ENCODE measurements at regions of chr12 and their contacts with region 1.

Region 1: DNA sequence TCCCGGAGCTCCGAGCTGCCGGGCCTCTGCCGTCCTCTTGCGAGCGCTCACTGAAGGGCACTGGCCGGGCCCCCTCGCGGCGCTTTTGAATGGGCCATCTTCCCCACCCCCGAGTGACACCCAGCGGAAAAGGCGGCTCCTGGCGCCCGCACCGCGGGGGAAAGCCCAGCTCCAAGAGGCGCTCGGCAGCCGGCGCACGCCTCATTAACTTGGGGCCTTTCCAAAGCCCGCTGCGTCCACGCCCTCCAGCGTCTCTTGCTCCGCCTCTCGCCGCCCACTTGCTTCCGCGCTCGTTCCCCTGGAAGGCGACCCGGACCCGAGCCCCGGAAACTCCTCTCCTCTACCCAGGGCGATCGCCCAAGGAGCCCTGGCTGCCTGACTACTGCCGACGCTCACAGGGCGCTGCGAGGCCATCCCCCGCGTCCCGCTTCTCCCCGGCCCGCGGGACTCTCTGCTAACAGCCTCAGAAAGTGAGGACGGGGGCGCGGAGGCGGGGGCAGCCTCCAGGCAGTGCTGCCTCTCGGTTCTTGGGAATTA is at the start of gene PHLDA1:
- DNase-seq: peak; percentile 96
- H3K4me3 Mint-ChIP-seq: peak within 1 kb of the TSS; percentile 90
- H3K27ac Mint-ChIP-seq: peak within 1 kb of the TSS; percentile 91
- H3K4me1 Mint-ChIP-seq: peaks cover 29% of the 10 kb centered on the region
- H3K27me3 Mint-ChIP-seq: peaks cover 2% of the 10 kb centered on the region
- total RNA-seq, gene PHLDA1: 2.7 to 2.8 TPM

Region 2: GRCh38 chr12:75334384-75335030 is 697.1 kb before region 1 on chr12 and contains the start of gene GLIPR1L1:
- CTCF ChIA-PET with region 1: no interaction called
- intact Hi-C with region 1: loop called (anchors 2 kb)
- DNase-seq: peak; percentile 92
- H3K4me3 Mint-ChIP-seq: peak within 1 kb of the TSS; percentile 44
- H3K27ac Mint-ChIP-seq: no peak within 1 kb of the TSS
- H3K4me1 Mint-ChIP-seq: peaks cover 18% of the 10 kb centered on the region
- H3K27me3 Mint-ChIP-seq: peaks cover 32% of the 10 kb centered on the region
- total RNA-seq, gene GLIPR1L1: not detected

Region 3: GRCh38 chr12:75511116-75512048 is 520.2 kb before region 1 on chr12 and contains the start of gene KRR1:
- CTCF ChIA-PET with region 1: interaction called, 4 read pairs
- intact Hi-C with region 1: loop called (anchors 1 kb)
- DNase-seq: peak; percentile 95
- H3K4me3 Mint-ChIP-seq: peak within 1 kb of the TSS; percentile 95
- H3K27ac Mint-ChIP-seq: peak within 1 kb of the TSS; percentile 98
- H3K4me1 Mint-ChIP-seq: peaks cover 29% of the 10 kb centered on the region
- H3K27me3 Mint-ChIP-seq: no peaks in the 10 kb centered on the region
- total RNA-seq, gene KRR1: 81.1 to 83.9 TPM

Region 4: GRCh38 chr12:75722714-75723200 is 308.8 kb before region 1 on chr12:
- CTCF ChIA-PET with region 1: no interaction called
- intact Hi-C with region 1: loop called (anchors 2 kb)
- DNase-seq: peak; percentile 64
- H3K4me3 Mint-ChIP-seq: no peak overlapping the region
- H3K27ac Mint-ChIP-seq: peak overlapping the region; percentile 18
- H3K4me1 Mint-ChIP-seq: peaks cover 15% of the 10 kb centered on the region
- H3K27me3 Mint-ChIP-seq: peaks cover 6% of the 10 kb centered on the region

Region 5: DNA sequence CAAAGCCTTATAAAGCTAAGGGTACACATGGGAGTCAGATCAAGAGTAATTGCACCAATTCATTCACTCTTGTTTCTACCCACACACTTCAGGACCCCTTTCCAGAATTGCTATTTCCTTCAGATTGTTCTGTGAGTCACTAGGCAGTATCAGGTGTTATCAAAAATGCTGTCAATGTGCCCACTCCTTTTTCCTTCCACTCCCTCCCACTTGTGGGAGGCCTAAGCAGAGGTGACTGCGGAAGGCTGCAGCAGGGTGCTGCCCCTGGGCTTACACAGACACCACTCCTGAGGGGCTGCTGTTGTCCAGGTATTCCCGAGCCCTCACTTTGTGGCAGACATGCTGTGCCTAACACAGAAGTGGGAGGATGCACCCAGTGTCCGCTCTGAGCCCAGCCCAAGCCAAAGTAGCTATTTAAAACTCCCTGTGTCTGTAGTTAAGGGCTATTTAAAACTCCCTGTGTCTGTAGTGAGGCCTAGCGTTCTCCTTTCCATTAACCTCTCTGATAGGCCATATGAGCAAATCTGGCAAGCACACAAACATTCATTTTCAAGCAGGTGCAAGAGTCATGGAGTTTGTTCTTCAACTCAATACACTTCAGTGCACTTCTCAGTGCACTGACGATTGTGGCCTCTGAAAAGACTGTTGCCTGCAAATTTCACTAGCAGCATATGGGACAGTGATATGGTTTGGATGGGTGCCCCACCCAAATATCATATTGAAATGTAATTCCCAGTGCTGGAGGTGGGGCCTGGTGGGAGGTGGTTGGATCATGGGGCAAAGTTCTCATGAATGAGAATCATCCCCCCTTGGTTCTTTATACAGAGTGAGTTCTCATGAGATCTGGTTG is 117.9 kb before region 1 on chr12:
- CTCF ChIA-PET with region 1: no interaction called
- intact Hi-C with region 1: loop called (anchors 1 kb)
- DNase-seq: peak; percentile 49
- H3K4me3 Mint-ChIP-seq: no peak overlapping the region
- H3K27ac Mint-ChIP-seq: no peak overlapping the region
- H3K4me1 Mint-ChIP-seq: peaks cover 21% of the 10 kb centered on the region
- H3K27me3 Mint-ChIP-seq: no peaks in the 10 kb centered on the region

Region 6: GRCh38 chr12:75977952-75978671 is 53.5 kb before region 1 on chr12:
- CTCF ChIA-PET with region 1: interaction called, 17 read pairs
- intact Hi-C with region 1: loop called (anchors 1 kb)
- DNase-seq: peak; percentile 90
- H3K4me3 Mint-ChIP-seq: peak overlapping the region; percentile 57
- H3K27ac Mint-ChIP-seq: peak overlapping the region; percentile 99
- H3K4me1 Mint-ChIP-seq: peaks cover 60% of the 10 kb centered on the region
- H3K27me3 Mint-ChIP-seq: no peaks in the 10 kb centered on the region

Region 7: GRCh38 chr12:76101739-76102385 is 70.3 kb after region 1 on chr12:
- CTCF ChIA-PET with region 1: no interaction called
- intact Hi-C with region 1: no loop called
- DNase-seq: no peak
- H3K4me3 Mint-ChIP-seq: no peak overlapping the region
- H3K27ac Mint-ChIP-seq: no peak overlapping the region
- H3K4me1 Mint-ChIP-seq: no peaks in the 10 kb centered on the region
- H3K27me3 Mint-ChIP-seq: no peaks in the 10 kb centered on the region

Region 8: DNA sequence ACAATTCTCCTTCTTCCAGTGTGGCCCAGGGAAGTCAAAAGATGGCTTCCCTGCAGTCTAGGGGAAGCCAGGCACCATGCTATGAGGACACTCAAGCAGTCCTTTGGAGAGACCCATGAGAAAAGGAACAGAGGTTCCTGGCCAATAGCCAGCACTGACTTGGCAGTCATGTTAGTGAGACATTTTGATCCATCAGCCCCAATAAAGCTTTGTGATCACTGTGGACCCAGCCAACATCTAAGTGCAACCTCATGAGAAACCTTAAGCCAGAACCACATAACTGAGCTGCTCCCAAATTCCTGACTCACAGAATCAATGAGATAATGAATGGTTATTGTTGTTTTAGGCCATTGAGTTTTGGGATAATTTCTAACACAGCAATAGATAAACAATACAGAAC is 103.9 kb after region 1 on chr12:
- CTCF ChIA-PET with region 1: no interaction called
- intact Hi-C with region 1: no loop called
- DNase-seq: no peak
- H3K4me3 Mint-ChIP-seq: no peak overlapping the region
- H3K27ac Mint-ChIP-seq: no peak overlapping the region
- H3K4me1 Mint-ChIP-seq: no peaks in the 10 kb centered on the region
- H3K27me3 Mint-ChIP-seq: no peaks in the 10 kb centered on the region

Region 9: DNA sequence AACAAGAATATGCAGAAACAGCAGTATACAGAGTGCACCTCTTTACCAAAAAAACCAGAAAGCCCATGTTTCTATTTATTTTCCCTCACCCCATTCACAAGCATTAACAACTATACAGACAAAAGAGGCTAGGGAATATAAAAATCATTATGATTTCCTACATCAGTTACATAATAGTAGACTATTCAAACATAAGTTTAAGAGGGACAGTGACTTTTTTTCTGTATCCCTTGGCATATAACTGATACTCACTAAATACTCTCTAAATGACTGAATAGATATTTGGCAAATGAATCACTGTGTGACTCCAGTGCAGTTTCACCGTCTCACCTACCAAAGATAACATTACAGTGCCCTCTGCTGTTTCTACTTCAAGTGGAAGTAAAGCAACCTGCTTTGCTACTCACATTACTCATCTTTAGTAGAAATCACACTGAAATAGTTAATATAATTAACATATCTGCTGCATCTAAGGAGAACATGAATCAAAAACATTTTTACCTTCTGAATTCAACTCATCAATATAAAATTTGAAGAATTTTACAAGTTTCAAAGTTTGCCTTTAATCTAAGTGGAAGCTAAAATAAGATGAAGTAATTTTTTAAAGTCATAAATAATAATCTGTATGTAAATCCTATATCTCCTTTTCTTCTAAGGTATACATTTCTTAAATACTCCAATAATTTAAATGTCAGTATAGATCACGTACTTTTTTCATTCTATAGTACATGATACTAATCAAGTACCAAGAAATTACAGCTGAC is 424.2 kb after region 1 on chr12:
- CTCF ChIA-PET with region 1: no interaction called
- intact Hi-C with region 1: loop called (anchors 1 kb)
- DNase-seq: peak; percentile 52
- H3K4me3 Mint-ChIP-seq: no peak overlapping the region
- H3K27ac Mint-ChIP-seq: no peak overlapping the region
- H3K4me1 Mint-ChIP-seq: peaks cover 15% of the 10 kb centered on the region
- H3K27me3 Mint-ChIP-seq: no peaks in the 10 kb centered on the region

Measured in activated naive CD4-positive, alpha-beta T cell treated with anti-CD3 and anti-CD28 coated beads for 36 hours (primary cell).